Common myeloid progenitor, CD34-positive (primary cell): ENCODE measurements at regions of chr12 and their contacts with region 1.

Region 1: DNA sequence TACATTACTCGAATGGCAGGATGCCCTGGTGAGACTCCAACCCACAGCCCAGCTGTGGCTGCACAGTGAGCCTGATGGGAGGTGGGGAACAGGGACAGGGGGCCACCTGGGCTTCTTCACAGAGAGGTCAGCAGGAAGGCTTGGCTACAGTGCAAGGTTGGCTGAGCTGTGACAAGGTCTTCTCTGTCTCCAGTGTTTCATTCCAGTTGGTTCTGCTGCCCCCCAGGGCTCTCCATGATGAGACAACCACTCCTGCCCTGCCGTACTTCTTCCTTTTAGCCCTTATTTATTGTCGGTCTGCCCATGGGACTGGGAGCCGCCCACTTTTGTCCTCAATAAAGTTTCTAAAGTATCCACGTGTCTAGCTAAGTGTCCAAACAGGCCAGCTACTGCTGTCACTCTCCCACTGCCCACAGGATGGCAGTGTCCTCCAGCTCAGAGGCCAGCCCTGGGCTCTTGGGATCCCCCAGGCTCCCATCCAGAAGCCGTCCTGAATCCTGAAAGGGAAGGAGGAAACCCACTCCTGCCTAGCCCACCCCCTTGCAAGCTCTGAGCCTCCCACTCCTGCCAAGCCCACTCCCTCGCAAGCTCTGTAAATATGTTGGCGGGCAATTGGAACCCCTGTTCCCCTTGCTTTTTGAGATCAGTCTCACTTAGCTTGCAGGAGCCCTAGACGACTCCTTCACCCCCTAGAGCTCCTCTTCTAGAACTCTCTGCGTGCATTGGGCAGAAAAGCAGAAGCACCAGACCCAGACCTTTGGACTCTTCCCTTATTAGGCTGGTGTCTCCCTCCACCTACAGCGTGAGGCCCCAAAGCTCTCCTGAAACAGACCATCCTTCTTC is 5.4 kb downstream of the C1QL4 start:
- DNase-seq: peak in 1 of 3 donors; percentile 36
- H3K4me3 ChIP-seq: no peak overlapping the region
- H3K27ac ChIP-seq: no peak overlapping the region
- H3K4me1 ChIP-seq: peaks cover 0 to 10% (median 2%) of the 10 kb centered on the region in 4 experiments
- H3K27me3 ChIP-seq: peaks cover 0 to 64% (median 32%) of the 10 kb centered on the region in 5 experiments

Region 2: DNA sequence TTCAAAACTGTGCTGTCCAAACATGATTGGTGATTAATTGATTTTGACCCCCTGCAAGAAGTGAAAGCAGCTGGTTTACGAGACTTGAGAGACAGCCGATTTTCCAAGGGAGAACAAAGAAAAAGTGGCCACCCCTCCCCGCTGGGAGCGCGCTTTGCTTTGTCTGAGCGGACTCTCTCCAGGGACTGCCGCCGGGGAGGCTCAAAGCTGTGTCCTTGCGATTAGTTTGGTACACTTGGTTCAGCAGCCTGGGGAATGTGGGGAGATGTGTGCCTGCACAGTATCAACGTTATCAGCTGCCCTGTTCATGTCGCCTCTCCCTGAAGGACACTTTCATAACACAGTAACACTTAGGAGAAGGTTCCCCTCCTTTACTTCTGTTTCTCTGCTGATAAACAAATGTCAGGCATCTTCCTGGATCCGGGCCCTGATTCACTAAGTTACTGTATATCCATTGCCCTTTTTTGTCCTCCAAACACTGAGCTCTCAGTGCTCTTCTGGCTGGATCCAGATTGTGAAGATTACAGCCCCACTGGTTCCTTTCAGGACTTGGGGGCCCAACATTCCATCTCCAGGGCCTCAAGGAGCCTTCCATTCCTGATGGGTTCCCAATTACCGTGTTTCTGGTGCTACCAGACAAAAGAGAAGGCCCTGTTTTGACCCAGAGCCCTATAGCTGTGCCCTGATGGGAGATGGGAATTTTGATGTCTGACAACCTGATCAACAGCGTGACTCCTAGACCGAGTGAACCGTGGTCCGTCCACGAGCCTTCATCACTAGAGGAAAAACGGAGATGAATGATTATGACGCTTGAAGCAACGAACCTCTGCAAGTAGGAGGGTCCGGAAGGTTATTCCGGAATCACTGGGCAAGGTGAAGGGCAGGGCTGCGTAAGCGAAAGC is 98.4 kb before region 1 on chr12:
- CTCF ChIA-PET with region 1: no interaction called
- POLR2A ChIA-PET with region 1: no interaction called
- DNase-seq: peak; percentile 19 to 64 (median 41)
- H3K4me3 ChIP-seq: peak overlapping the region in 6 of 7 experiments; percentile 16 to 85 (median 67)
- H3K27ac ChIP-seq: peak overlapping the region; percentile 86 to 92
- H3K4me1 ChIP-seq: peaks cover 15 to 63% (median 21%) of the 10 kb centered on the region in 4 experiments
- H3K27me3 ChIP-seq: no peaks in the 10 kb centered on the region

Region 3: DNA sequence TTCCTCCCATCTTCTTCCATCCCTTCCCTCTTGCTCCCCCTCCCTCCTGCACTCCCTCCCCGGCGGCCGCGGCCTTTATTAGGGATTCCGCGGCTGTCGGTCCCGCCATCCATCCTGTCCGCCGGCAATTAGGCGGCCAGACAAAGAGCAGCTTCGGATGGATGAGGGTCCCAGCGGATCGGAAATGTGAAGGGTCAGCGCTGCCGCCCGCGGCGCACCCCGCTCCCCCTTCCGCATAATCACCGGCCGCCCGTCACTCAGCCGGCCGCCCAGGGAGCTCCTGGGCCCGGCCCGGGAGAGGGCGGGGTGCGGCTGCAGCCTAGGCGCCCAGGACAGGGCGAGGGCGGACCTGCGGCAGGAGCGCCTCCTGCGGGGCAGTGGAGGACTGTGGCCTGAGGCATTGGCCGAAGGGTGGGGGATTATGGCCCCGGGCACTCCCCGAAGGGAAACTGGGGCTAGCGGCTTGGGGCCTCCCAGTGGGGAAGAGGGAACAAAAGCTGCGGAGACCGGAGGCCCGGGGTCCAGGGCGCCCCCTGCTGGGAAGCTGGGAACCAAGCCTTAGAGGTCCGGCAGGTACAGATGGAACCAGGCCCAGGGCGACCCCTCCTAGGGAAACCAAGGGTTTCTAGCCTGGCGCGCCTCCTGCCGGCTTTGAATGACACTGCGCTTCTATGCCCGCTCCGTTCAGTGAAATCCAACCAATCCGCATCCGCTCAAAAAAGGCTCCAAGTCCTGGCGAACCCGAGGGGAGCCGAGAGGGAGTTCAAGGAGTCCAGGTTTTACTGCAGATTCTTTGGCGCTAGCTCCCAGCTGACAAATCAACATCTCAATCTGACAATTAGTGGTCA is 10.7 kb after region 1 on chr12:
- CTCF ChIA-PET with region 1: interaction called, 46 read pairs
- POLR2A ChIA-PET with region 1: no interaction called
- DNase-seq: peak; percentile 84 to 90 (median 88)
- H3K4me3 ChIP-seq: peak overlapping the region; percentile 8 to 73 (median 26)
- H3K27ac ChIP-seq: no peak overlapping the region
- H3K4me1 ChIP-seq: peaks cover 0 to 55% (median 40%) of the 10 kb centered on the region in 4 experiments
- H3K27me3 ChIP-seq: peaks cover 11 to 100% (median 49%) of the 10 kb centered on the region in 5 experiments

Region 4: DNA sequence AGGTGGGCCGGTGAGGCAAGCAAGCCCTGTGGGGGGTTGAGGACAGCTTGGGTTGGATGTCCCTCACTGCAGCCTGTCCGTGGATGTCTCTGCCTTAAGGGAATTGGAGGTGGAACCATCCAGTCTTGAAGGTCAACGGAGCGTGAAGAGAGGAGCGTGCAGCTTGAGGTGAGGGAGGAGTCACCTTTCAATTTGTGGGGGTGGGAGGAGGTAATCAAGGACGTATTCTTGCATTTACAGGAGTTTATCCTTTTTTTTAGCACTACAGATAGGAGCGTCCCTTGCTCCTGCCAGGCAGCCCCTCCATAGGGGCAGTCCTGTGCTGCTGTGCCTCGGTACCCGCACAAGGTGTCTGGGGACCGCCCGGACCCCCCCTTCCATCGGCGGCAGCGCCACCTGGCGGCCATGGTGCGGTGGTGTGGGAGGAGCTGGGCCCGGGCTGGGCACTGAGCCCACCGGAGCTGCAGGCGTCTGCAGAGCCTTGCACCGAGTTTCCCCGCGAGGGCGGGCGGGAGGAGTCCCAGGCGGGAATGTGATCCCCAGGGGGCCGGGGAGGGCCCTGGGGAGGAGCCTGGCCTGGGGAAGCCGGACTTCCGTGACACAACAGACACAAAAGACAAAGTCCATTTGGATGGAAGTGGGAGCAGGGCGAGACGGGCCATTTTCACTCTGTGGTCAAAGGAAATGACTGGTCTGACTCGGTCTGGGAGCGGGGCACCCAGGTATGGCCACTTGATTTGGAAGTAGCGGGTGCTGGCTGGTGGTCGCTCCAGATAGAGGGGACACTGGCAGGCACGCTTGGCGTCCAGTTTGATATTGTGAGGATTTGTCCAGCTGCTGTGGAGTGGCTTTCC is 16.0 kb after region 1 on chr12:
- CTCF ChIA-PET with region 1: interaction called, 46 read pairs
- POLR2A ChIA-PET with region 1: no interaction called
- DNase-seq: peak; percentile 54 to 69 (median 69)
- H3K4me3 ChIP-seq: peak overlapping the region in 5 of 7 experiments; percentile 22 to 66 (median 34)
- H3K27ac ChIP-seq: no peak overlapping the region
- H3K4me1 ChIP-seq: peaks cover 0 to 49% (median 38%) of the 10 kb centered on the region in 4 experiments
- H3K27me3 ChIP-seq: peaks cover 4 to 81% (median 48%) of the 10 kb centered on the region in 5 experiments

Region 5: GRCh38 chr12:49366652-49367380 is 35.2 kb after region 1 on chr12:
- CTCF ChIA-PET with region 1: interaction called, 10 read pairs
- POLR2A ChIA-PET with region 1: no interaction called
- DNase-seq: peak; percentile 87 to 95 (median 93)
- H3K4me3 ChIP-seq: peak overlapping the region; percentile 69 to 94 (median 79)
- H3K27ac ChIP-seq: peak overlapping the region; percentile 66 to 87
- H3K4me1 ChIP-seq: peaks cover 19 to 31% (median 26%) of the 10 kb centered on the region in 4 experiments
- H3K27me3 ChIP-seq: no peaks in the 10 kb centered on the region